Esophagus muscularis mucosa (tissue), 4 donors: ENCODE measurements at regions of chr7 and their contacts with region 1.

Region 1: GRCh38 chr7:151304856-151305255 is 36.8 kb upstream of the NUB1 start:
- DNase-seq: no peak
- H3K4me3 ChIP-seq: peak overlapping the region in 1 of 4 donors; percentile 7
- H3K27ac ChIP-seq: no peak overlapping the region
- H3K4me1 ChIP-seq: peaks cover 10 to 13% (median 12%) of the 10 kb centered on the region in 4 donors
- H3K27me3 ChIP-seq: peaks cover 0 to 75% (median 11%) of the 10 kb centered on the region in 4 donors
- CTCF ChIP-seq: no peak
- EP300 ChIP-seq: no peak
- POLR2A ChIP-seq: no peak

Region 2: GRCh38 chr7:151123822-151124464 is 180.9 kb before region 1 on chr7:
- intact Hi-C with region 1: loop called (anchors 2 kb)
- DNase-seq: no peak
- H3K4me3 ChIP-seq: no peak overlapping the region
- H3K27ac ChIP-seq: no peak overlapping the region
- H3K4me1 ChIP-seq: peaks cover 15 to 32% (median 21%) of the 10 kb centered on the region in 4 donors
- H3K27me3 ChIP-seq: no peaks in the 10 kb centered on the region
- CTCF ChIP-seq: peak; percentile 92 to 100 (median 95)
- EP300 ChIP-seq: no peak
- POLR2A ChIP-seq: no peak

Region 3: GRCh38 chr7:151172273-151173141 is 132.3 kb before region 1 on chr7:
- intact Hi-C with region 1: loop called (anchors 5 kb)
- DNase-seq: no peak
- H3K4me3 ChIP-seq: no peak overlapping the region
- H3K27ac ChIP-seq: no peak overlapping the region
- H3K4me1 ChIP-seq: peaks cover 8 to 27% (median 12%) of the 10 kb centered on the region in 4 donors
- H3K27me3 ChIP-seq: peaks cover 5 to 86% (median 15%) of the 10 kb centered on the region in 4 donors
- CTCF ChIP-seq: peak in 2 of 3 experiments; percentile 100
- EP300 ChIP-seq: no peak
- POLR2A ChIP-seq: no peak

Region 4: GRCh38 chr7:151244196-151244840 is 60.5 kb before region 1 on chr7:
- intact Hi-C with region 1: loop called (anchors 2 kb)
- DNase-seq: no peak
- H3K4me3 ChIP-seq: no peak overlapping the region
- H3K27ac ChIP-seq: peak overlapping the region in 2 of 4 donors; percentile 2 to 25
- H3K4me1 ChIP-seq: peaks cover 55 to 67% (median 62%) of the 10 kb centered on the region in 4 donors
- H3K27me3 ChIP-seq: peaks cover 0 to 12% (median 0%) of the 10 kb centered on the region in 4 donors
- CTCF ChIP-seq: peak in 2 of 3 experiments; percentile 79 to 82
- EP300 ChIP-seq: no peak
- POLR2A ChIP-seq: no peak